ENCODE measurements at regions of chr22 and their contacts with region 1.

Region 1: GRCh38 chr22:38793721-38794466 is at the start of gene DNAL4:
- DNase-seq: peak; percentile 98 to 99
- H3K4me3 ChIP-seq: peak within 1 kb of the TSS; percentile 85 to 94
- H3K27ac ChIP-seq: peak within 1 kb of the TSS; percentile 90 to 92
- H3K4me1 ChIP-seq: peaks cover 0 to 17% (median 11%) of the 10 kb centered on the region in 4 donors
- H3K27me3 ChIP-seq: peaks cover 0 to 6% of the 10 kb centered on the region in 2 donors
- CTCF ChIP-seq: no peak

Region 2: DNA sequence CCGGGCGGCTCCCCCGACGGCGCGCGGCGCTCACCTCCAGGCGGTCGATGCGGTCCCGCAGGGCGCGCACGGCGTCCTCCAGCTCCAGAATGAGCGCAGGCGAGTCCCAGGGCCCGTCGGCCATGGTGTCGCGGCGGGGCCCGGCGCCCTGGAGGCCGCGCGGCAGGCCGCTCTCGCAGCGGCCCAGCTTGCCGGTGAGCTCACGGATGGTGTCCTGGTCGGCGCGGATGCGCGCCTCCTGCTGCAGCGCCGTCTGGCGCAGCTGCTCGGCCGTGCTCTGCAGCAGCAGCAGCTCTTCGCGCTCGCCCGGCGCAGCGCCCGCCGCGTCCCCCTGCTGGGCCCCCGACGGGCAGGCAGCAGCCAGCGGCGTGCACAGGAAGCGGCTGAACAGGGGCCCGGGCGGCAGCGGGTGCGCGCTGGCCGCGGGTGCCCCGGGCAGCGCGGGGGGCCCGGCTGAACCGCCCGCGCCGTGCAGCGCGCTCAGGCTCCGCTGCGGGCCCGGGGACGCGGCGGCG is 49.4 kb after region 1 on chr22:
- intact Hi-C with region 1: loop called (anchors 10 kb)
- DNase-seq: no peak
- H3K4me3 ChIP-seq: peak overlapping the region; percentile 58 to 80
- H3K27ac ChIP-seq: peak overlapping the region; percentile 80 to 89
- H3K4me1 ChIP-seq: peaks cover 0 to 61% (median 45%) of the 10 kb centered on the region in 4 donors
- H3K27me3 ChIP-seq: no peaks in the 10 kb centered on the region
- CTCF ChIP-seq: peak; percentile 33 to 36

Region 3: DNA sequence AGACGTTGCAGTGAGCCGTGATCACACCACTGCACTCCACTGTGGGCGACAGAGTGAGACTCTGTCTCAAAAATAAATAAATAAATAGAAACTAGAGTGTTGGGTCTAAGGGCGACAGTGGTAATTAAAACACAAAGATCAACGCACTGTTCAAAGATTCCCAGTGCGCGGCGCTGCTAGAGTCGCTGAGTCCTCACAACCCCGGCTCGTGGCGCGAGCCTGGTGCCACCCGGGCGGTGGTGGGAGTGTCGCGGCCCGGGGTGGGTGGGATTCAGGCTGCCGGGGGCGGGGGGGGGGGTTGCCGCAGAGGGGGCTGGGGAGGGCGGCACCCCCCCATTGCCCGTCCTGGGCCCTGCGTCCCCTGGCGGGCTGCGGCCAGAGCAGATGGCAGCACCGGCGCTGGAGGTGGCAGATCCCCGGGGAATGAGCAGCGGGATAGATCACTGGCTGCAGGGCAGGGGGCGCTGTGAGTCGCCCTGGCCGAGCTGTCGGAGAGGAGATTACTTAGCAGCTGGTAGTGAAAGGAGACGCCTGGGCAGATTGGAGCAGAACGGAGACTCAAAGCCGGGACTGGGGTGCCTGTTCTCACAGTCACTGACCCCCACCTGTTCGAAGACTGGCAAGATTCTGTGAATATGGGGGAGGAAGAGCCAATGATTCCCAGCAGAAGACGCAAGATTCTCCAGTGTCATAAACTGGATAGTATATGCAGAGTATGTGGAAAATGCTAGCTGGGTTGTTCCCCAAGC is 133.3 kb after region 1 on chr22:
- intact Hi-C with region 1: no loop called
- DNase-seq: peak; percentile 63 to 86
- H3K4me3 ChIP-seq: peak overlapping the region; percentile 44 to 51
- H3K27ac ChIP-seq: peak overlapping the region; percentile 75 to 82
- H3K4me1 ChIP-seq: peaks cover 0 to 51% (median 27%) of the 10 kb centered on the region in 4 donors
- H3K27me3 ChIP-seq: no peaks in the 10 kb centered on the region
- CTCF ChIP-seq: peak; percentile 33 to 72

Measured in tibial artery (tissue), 4 donors.